H1 (cell line): ENCODE measurements at regions of chr1 and their contacts with region 1.

Region 1: GRCh38 chr1:115609021-115609420 is 32.7 kb upstream of the VANGL1 start:
- DNase-seq: no peak
- H3K4me3 ChIP-seq: no peak overlapping the region
- H3K27ac ChIP-seq: no peak overlapping the region
- H3K4me1 ChIP-seq: peaks cover 0 to 4% (median 0%) of the 10 kb centered on the region in 4 experiments; a peak in 1 of 7 replicates
- H3K27me3 ChIP-seq: no peaks in the 10 kb centered on the region; a peak in 1 of 7 replicates
- CTCF ChIP-seq: no peak
- EP300 ChIP-seq: no peak
- POLR2A ChIP-seq: no peak
- RAD21 ChIP-seq: no peak

Region 2: DNA sequence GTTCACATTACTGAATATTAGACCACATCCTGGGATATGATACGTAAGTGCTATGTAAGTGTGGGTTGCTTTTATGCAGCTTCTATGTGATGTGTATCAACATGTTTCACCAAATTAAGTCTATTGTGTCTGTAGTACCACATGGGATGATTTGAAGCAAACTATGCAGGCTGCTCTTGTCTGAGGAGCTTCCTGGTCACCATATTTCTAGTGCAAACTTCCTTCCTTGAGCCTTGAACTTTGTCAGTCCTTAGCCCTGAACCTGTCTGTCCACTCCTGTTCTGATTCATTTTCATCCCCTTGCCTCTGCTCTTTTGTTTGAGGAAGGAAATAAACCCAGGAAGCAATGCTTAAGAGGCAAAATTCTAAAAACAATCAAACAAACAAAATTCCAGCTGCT is 84.8 kb before region 1 on chr1:
- CTCF ChIA-PET with region 1: no interaction called
- POLR2A ChIA-PET with region 1: no interaction called
- DNase-seq: no peak
- H3K4me3 ChIP-seq: no peak overlapping the region
- H3K27ac ChIP-seq: no peak overlapping the region
- H3K4me1 ChIP-seq: peaks cover 0 to 2% (median 0%) of the 10 kb centered on the region in 4 experiments; a peak in 1 of 7 replicates
- H3K27me3 ChIP-seq: no peaks in the 10 kb centered on the region; a peak in 1 of 7 replicates
- CTCF ChIP-seq: no peak
- EP300 ChIP-seq: no peak
- POLR2A ChIP-seq: no peak
- RAD21 ChIP-seq: no peak

Region 3: DNA sequence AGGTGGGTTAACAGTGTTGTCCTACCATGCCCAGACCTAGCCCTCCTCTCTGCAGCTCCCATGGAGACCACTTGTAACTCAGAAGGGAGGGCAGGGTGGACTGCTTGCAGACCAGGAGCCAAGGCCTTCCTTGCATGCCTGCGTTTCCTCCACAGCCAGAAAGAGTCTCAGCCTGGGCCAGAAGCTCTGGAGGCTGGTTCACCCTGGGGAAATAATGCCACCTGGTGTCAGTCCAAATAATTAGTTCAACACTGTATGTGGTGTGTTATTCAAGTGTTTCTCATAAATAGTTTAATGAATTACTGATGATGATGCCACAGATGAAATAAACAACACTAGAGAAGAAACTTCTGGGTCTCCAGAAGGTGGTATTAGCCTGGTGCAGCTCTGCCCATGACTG is 15.8 kb after region 1 on chr1:
- CTCF ChIA-PET with region 1: interaction called, 12 read pairs
- POLR2A ChIA-PET with region 1: no interaction called
- DNase-seq: no peak
- H3K4me3 ChIP-seq: no peak overlapping the region
- H3K27ac ChIP-seq: no peak overlapping the region
- H3K4me1 ChIP-seq: no peaks in the 10 kb centered on the region
- H3K27me3 ChIP-seq: no peaks in the 10 kb centered on the region; a peak in 1 of 7 replicates
- CTCF ChIP-seq: peak in 1 of 3 experiments; percentile 21; a peak in 1 of 4 replicates
- EP300 ChIP-seq: no peak
- POLR2A ChIP-seq: no peak
- RAD21 ChIP-seq: peak; percentile 33 to 43

Region 4: GRCh38 chr1:115671176-115671934 is 62.3 kb after region 1 on chr1:
- CTCF ChIA-PET with region 1: interaction called, 17 read pairs
- POLR2A ChIA-PET with region 1: no interaction called
- DNase-seq: no peak
- H3K4me3 ChIP-seq: no peak overlapping the region
- H3K27ac ChIP-seq: no peak overlapping the region
- H3K4me1 ChIP-seq: no peaks in the 10 kb centered on the region
- H3K27me3 ChIP-seq: no peaks in the 10 kb centered on the region
- CTCF ChIP-seq: no peak
- EP300 ChIP-seq: no peak
- POLR2A ChIP-seq: no peak
- RAD21 ChIP-seq: no peak

Region 5: DNA sequence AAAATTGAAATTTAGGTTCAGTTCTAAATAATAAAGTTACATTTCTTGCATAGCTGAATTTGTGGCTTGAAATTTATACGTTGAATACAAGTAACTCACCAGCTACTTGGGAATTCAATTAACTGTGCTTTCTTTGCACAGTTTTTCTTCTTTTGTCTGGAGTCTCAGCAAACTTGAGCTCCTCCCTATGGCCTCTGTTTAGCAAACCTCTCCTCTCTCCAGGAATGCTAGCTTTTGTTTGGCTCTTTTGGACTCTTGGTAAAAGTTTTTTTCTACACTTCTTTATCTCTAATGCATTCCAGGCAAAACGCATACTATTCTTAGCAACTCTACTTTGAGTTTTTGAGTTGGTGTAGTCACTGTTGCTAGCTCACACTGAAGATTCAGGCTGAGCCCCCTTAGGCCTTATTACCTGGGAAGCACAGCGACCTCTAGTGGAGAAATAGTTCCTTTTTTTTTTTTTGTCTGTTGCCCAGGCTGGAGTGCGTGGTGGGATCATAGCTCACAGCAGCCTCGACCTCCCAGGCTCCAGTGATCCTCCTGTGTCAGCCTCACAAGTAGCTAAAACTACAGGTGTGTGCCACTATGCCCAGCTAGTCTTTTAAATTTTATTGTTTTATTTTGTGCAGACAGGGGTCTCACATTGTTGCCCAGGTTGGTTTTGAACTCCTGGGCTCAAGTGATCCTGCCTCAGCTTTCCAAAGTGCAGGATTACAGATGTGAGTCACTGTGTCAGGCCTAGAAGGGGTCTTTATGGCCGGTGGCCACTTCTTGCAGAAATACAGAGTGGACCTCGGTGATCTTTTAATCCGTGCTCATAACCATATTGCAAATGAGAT is 97.8 kb after region 1 on chr1:
- CTCF ChIA-PET with region 1: interaction called, 66 read pairs
- POLR2A ChIA-PET with region 1: interaction called, 4 read pairs
- DNase-seq: no peak
- H3K4me3 ChIP-seq: no peak overlapping the region
- H3K27ac ChIP-seq: no peak overlapping the region
- H3K4me1 ChIP-seq: no peaks in the 10 kb centered on the region
- H3K27me3 ChIP-seq: no peaks in the 10 kb centered on the region
- CTCF ChIP-seq: peak in 2 of 3 experiments; percentile 64 to 70; a peak in 3 of 4 replicates
- EP300 ChIP-seq: no peak
- POLR2A ChIP-seq: no peak
- RAD21 ChIP-seq: peak; percentile 66 to 74

Region 6: GRCh38 chr1:115764541-115764940 is 155.5 kb after region 1 on chr1:
- CTCF ChIA-PET with region 1: interaction called, 47 read pairs
- POLR2A ChIA-PET with region 1: no interaction called
- DNase-seq: no peak
- H3K4me3 ChIP-seq: no peak overlapping the region
- H3K27ac ChIP-seq: no peak overlapping the region
- H3K4me1 ChIP-seq: no peaks in the 10 kb centered on the region
- H3K27me3 ChIP-seq: no peaks in the 10 kb centered on the region
- CTCF ChIP-seq: peak in 2 of 3 experiments; percentile 68 to 75; a peak in 3 of 4 replicates
- EP300 ChIP-seq: no peak
- POLR2A ChIP-seq: no peak
- RAD21 ChIP-seq: peak; percentile 83 to 88